Activated CD4-positive, alpha-beta memory T cell treated with anti-CD3 and anti-CD28 coated beads, Interleukin-2, amount 10 ng/mL, durations not matched to agents 7 days and 5 days (primary cell): ENCODE measurements at regions of chr20 and their contacts with region 1.

Region 1: GRCh38 chr20:34704177-34705007 is at the start of gene TP53INP2:
- DNase-seq: peak; percentile 92
- H3K4me3 Mint-ChIP-seq: peak within 1 kb of the TSS; percentile 91
- H3K27ac Mint-ChIP-seq: peak within 1 kb of the TSS; percentile 86
- H3K4me1 Mint-ChIP-seq: peaks cover 41% of the 10 kb centered on the region
- H3K27me3 Mint-ChIP-seq: peaks cover 13% of the 10 kb centered on the region
- total RNA-seq, gene TP53INP2: 3.3 TPM

Region 2: DNA sequence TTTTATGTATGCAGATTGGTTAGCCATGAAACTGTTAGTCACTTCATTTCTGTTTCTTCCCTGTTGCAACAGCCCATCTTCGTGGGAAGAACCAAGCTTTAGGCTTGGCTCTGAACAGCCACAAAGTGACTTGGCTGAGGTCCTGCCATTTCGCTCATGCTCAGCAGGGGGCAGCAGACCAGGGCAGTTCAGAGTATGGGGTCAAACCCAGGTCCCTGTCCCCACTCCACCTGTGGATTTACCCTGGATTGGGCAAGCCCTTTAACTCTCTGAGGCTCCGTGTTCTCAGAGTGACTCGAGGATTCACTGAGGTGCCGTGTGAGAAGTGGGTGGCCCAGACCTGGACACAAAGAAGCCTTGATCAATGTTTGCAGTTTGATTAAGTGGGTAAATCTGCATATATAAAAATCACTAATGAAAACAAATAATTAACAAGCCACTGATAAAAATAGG is 165.7 kb before region 1 on chr20:
- CTCF ChIA-PET with region 1: interaction called, 43 read pairs
- POLR2A ChIA-PET with region 1: interaction called, 3 read pairs
- DNase-seq: peak; percentile 61
- H3K4me3 Mint-ChIP-seq: no peak overlapping the region
- H3K27ac Mint-ChIP-seq: no peak overlapping the region
- H3K4me1 Mint-ChIP-seq: peaks cover 19% of the 10 kb centered on the region
- H3K27me3 Mint-ChIP-seq: no peaks in the 10 kb centered on the region

Region 3: GRCh38 chr20:34654207-34654744 is 50.1 kb before region 1 on chr20:
- CTCF ChIA-PET with region 1: no interaction called
- POLR2A ChIA-PET with region 1: no interaction called
- DNase-seq: no peak
- H3K4me3 Mint-ChIP-seq: no peak overlapping the region
- H3K27ac Mint-ChIP-seq: no peak overlapping the region
- H3K4me1 Mint-ChIP-seq: no peaks in the 10 kb centered on the region
- H3K27me3 Mint-ChIP-seq: no peaks in the 10 kb centered on the region

Region 4: DNA sequence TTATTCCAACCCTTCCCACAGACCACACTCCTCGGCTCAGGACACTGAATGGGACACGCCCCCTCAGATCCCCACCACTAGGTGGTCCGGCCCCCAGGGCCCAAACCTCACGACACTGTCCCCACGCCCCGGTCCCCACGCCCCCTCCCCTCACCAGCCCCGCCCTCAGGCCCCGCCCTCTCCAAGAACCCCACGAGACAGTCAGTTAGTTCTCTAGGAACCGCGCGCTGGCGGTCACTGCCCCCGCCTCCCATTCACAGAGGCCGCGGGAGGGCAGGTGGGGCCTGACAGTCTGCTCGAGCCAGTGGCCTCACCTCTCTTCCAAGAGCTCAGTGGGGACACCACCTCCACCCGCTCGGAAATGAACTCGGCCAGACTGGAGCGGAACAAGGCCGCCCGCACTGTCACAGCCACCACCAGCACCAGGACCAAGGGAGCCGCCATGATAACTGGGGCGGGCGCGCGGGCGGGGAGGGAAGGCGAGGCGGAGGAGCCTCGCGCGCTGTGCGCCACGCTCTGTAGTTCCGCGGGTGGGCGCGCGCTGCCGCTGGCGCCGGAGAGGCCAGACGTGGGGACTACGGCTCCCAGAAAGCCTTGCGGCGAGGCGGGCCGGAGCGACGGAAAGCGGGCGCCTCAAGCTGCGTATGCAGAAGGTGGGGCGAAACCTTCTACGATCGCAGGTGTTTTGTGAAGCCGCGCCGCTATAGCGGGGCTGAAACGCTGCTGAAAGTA is 27.6 kb before region 1 on chr20 and contains the start of gene PIGU:
- CTCF ChIA-PET with region 1: interaction called, 4 read pairs
- POLR2A ChIA-PET with region 1: interaction called, 17 read pairs
- DNase-seq: peak; percentile 98
- H3K4me3 Mint-ChIP-seq: peak within 1 kb of the TSS; percentile 98
- H3K27ac Mint-ChIP-seq: peak within 1 kb of the TSS; percentile 88
- H3K4me1 Mint-ChIP-seq: peaks cover 36% of the 10 kb centered on the region
- H3K27me3 Mint-ChIP-seq: no peaks in the 10 kb centered on the region
- total RNA-seq, gene PIGU: 18.3 to 18.6 TPM